A673 (cell line): ENCODE measurements at regions of chrX and their contacts with region 1.

Region 1: DNA sequence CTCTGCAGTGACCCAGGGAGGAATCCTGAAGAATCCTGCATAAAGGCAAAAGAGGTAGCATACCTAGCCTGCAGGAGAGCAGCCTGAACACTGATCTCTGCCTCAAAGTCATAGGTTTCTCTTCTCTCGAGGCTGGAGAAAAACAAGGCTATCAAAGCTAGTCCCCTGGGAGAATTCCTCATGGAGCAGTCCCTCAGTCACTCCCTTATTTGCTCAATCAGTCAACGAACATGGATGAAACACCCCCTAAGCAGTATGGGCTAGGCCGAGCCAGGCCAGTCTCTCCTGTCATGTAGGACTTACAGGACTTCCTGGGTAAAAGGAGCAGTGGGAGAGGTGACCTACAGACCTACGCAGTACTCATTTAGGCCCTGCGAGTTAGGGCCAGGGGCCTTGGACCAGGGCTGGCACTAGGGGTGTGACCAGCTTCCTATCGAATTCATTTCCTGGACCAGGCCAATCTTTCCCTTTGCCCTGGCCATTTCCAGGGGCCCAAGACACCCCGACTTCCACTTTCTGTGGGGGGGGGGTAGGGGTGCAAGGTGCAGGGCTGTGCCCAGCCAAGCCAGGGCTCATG is 164.1 kb downstream of the EFNB1 start:
- DNase-seq: no peak
- H3K4me3 ChIP-seq: no peak overlapping the region
- H3K27ac ChIP-seq: no peak overlapping the region
- H3K4me1 ChIP-seq: no peaks in the 10 kb centered on the region
- H3K27me3 ChIP-seq: no peaks in the 10 kb centered on the region
- CTCF ChIP-seq: no peak

Region 2: GRCh38 chrX:68249401-68249831 is 743.5 kb before region 1 on chrX:
- CTCF ChIA-PET with region 1: interaction called, 13 read pairs
- POLR2A ChIA-PET with region 1: no interaction called
- intact Hi-C with region 1: no loop called
- DNase-seq: no peak
- H3K4me3 ChIP-seq: no peak overlapping the region
- H3K27ac ChIP-seq: no peak overlapping the region
- H3K4me1 ChIP-seq: no peaks in the 10 kb centered on the region
- H3K27me3 ChIP-seq: no peaks in the 10 kb centered on the region
- CTCF ChIP-seq: no peak